Transverse colon (tissue), 4 donors: ENCODE measurements at regions of chr2 and their contacts with region 1.

Region 1: DNA sequence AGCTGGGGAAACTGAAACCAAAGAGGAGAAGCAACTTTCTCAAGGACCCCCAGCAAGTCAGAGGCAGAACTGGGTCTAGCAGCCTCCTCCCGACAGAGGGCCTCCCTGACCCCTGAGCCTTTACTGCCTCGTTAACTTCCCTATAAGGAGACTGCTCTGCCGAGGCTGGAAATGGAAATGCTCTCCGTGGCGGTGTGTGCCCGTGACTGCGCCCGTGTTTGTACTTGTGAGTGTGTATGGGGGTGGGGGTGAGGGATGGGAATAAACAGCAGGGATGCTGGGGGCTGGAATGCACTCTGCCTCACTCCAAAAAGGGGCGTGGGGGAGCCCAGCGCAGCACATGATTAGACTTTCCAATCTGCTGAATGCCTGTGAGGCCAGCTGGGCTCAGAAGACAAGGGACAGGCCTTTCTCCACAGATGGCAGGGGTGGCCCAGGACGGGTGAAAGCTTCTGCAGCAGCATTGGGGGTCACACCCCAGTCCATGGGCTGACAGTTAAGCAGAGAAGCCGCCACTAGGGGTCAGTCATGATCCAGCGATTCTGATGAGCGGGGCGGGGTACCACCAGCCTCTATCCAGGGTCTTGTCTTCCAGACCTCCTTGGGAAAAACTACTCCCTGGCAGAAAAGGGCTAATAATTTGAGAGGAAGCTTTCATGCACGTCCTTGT is 26.8 kb downstream of the MPHOSPH10 start:
- DNase-seq: peak; percentile 59
- H3K4me3 ChIP-seq: peak overlapping the region in 1 of 4 donors; percentile 29
- H3K27ac ChIP-seq: peak overlapping the region in 3 of 4 donors; percentile 17 to 32 (median 29)
- H3K4me1 ChIP-seq: peaks cover 0 to 12% (median 9%) of the 10 kb centered on the region in 4 donors
- H3K27me3 ChIP-seq: no peaks in the 10 kb centered on the region
- CTCF ChIP-seq: peak; percentile 55 to 70 (median 57)
- EP300 ChIP-seq: no peak
- POLR2A ChIP-seq: no peak

Region 2: DNA sequence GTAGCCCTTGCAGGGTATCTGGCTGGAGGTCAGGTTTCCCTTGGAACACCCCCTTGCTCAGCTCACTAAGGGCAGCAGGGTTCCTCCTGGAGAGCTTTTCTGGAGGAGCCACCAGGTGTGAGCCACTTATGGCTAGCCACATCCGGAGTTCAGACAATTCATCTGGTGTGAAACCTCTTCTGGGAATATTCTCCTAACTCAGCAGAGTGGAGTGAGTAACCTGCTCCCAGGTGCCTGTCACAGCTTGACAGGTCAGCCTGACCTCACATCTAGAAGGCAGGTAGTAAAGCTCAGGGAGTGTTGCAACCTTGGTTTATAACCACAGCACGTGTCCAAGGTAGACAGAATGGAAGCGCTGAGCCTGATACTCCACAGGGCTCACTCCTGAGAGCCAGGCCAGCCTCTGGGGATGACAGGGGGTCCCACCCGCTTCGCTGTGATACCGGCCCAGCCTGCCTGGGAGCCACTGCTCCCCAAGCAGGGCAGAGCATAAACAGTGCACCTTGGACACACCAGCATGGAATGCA is 541.0 kb before region 1 on chr2:
- in situ Hi-C with region 1: no loop called
- intact Hi-C with region 1: no loop called
- DNase-seq: peak; percentile 52
- H3K4me3 ChIP-seq: no peak overlapping the region
- H3K27ac ChIP-seq: no peak overlapping the region
- H3K4me1 ChIP-seq: peaks cover 0 to 3% (median 0%) of the 10 kb centered on the region in 4 donors
- H3K27me3 ChIP-seq: no peaks in the 10 kb centered on the region
- CTCF ChIP-seq: no peak
- EP300 ChIP-seq: no peak
- POLR2A ChIP-seq: no peak

Region 3: DNA sequence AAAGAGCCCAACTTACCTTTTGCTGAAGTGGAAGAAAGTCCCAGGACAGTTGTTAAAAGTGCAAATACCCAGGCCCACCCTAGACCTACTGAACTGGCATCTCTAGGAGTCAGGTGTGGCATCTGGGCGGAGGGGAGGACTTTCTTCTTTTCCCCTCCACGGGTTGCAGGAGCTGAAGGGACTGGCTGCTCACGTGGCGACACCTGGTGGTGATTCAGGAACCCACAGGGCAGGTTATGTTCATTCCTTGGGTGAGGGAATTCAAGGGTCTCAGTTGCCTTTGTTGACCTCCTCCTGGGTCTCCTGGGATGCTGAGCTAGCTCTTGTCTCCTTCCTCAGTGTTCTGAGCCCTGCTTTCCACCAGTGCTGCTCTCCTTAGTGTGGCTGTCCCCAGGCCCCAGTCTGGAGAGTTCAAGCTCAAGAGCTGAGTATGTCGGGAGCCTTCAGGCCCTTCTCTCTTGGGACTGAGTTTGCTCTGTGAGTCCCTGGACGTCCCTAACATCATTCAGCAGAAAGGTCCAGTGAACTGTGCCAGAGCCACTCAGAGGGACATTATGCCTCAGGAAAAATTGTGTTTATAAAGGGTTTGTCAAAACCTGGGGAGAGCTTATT is 353.0 kb after region 1 on chr2:
- in situ Hi-C with region 1: loop called in 1 of 4 experiments (anchors 25 kb)
- intact Hi-C with region 1: no loop called
- DNase-seq: peak; percentile 70
- H3K4me3 ChIP-seq: no peak overlapping the region
- H3K27ac ChIP-seq: no peak overlapping the region
- H3K4me1 ChIP-seq: no peaks in the 10 kb centered on the region
- H3K27me3 ChIP-seq: no peaks in the 10 kb centered on the region
- CTCF ChIP-seq: peak; percentile 86 to 93 (median 91)
- EP300 ChIP-seq: no peak
- POLR2A ChIP-seq: no peak